ENCODE measurements at regions of chr2 and their contacts with region 1.

Region 1: GRCh38 chr2:230987137-230988020 is 8.5 kb upstream of the SPATA3 start:
- DNase-seq: peak; percentile 85

Region 2: GRCh38 chr2:230296917-230297316 is 690.5 kb before region 1 on chr2:
- in situ Hi-C with region 1: no loop called
- DNase-seq: no peak

Region 3: GRCh38 chr2:230847883-230848388 is 139.4 kb before region 1 on chr2:
- in situ Hi-C with region 1: loop called (anchors 25 kb)
- DNase-seq: peak; percentile 94

Region 4: GRCh38 chr2:230913406-230914143 is 73.8 kb before region 1 on chr2:
- in situ Hi-C with region 1: loop called (anchors 10 kb)
- DNase-seq: peak; percentile 81

Region 5: DNA sequence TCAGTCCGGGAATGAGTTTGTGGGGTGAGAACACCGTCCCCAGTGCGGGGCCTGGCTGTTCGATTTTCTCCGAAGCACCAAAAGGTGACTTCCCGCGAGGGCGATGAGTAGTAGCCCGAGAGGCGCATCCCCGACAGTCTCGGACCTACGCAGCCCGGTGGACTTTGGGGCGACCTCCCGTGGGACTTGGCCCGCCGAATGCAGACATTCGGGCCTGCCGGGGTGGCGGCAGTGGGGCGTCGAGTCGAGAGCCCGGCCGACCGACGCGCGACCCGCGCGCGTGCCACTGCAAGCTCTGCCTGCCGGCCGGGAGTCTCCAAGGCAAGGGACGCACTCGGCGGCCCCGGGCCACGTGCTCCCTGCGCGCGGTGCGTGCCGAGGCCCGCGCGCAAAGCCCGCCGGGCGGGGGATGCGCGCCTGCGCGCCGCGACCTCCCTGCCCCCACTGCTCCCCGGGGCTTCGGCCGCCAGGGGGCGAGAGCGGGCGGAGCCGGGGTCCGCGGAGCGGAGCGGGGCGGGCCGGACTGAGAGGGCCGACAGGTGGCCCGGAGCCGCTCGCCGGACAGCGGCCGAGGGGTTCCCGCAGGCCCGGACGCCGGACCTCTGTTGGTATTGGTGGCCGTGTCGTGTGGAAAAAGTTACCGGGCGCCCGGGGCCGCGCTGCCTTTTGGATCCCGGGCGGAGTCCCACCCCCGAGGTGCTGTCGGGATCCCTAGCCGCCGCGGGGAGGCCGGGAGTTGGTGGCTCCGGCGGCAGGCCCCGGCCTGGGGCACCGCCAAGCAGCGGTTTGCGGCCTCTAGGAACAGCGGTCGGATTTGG is 722.8 kb after region 1 on chr2:
- in situ Hi-C with region 1: no loop called
- DNase-seq: peak; percentile 68

Measured in KBM-7 (cell line).